ENCODE measurements at regions of chr10 and their contacts with region 1.

Region 1: DNA sequence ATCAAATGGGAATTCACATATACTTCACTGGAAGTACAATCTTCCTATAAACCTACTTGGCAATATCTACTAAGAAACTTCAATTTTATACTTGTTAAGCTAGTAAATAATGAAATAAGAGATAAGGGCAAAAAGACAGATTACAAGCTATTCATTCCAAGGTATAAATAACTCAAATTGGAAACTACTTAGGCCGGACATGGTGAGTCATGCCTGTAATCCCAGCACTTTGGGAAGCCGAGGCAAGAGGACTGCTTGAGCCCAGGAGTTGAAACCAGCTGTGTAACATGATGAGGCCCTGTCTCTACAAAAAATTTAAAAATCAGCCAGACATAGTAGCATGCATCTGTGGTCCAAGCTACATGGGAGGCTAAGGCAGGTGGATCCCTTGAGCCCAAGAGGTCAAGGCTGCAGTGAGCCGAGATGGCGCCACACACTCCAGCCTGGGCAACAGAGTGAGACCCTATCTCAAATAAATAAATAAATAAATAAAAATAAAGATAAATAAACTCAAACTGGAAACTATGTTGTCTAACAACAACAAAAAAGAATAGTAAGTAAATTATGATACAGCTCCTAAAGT is 37.6 kb downstream of the ARHGAP21 start:
- DNase-seq: peak; percentile 52
- H3K4me3 ChIP-seq: no peak overlapping the region
- H3K27ac ChIP-seq: no peak overlapping the region
- H3K4me1 ChIP-seq: peaks cover 10% of the 10 kb centered on the region
- H3K27me3 ChIP-seq: no peaks in the 10 kb centered on the region
- CTCF ChIP-seq: no peak
- POLR2A ChIP-seq: no peak

Region 2: GRCh38 chr10:24701447-24701846 is 15.4 kb after region 1 on chr10:
- CTCF ChIA-PET with region 1: interaction called, 5 read pairs
- POLR2A ChIA-PET with region 1: no interaction called
- dilution Hi-C with region 1: no loop called
- intact Hi-C with region 1: loop called (anchors 1 kb)
- DNase-seq: no peak
- H3K4me3 ChIP-seq: no peak overlapping the region
- H3K27ac ChIP-seq: no peak overlapping the region
- H3K4me1 ChIP-seq: peaks cover 5% of the 10 kb centered on the region
- H3K27me3 ChIP-seq: no peaks in the 10 kb centered on the region
- CTCF ChIP-seq: no peak
- POLR2A ChIP-seq: no peak